ENCODE measurements at regions of chr1 and their contacts with region 1.

Region 1: GRCh38 chr1:30881319-30882181 is 27.0 kb downstream of the SDC3 start:
- DNase-seq: peak; percentile 63
- ATAC-seq: peak; percentile 90
- H3K4me3 Mint-ChIP-seq: peak overlapping the region; percentile 9
- H3K27ac Mint-ChIP-seq: peak overlapping the region; percentile 60
- H3K4me1 Mint-ChIP-seq: peaks cover 19% of the 10 kb centered on the region
- H3K27me3 Mint-ChIP-seq: peaks cover 38% of the 10 kb centered on the region
- CTCF ChIP-seq: no peak

Region 2: GRCh38 chr1:30847358-30847972 is 34.1 kb before region 1 on chr1:
- CTCF ChIA-PET with region 1: no interaction called
- POLR2A ChIA-PET with region 1: no interaction called
- intact Hi-C with region 1: no loop called
- DNase-seq: no peak
- ATAC-seq: no peak
- H3K4me3 Mint-ChIP-seq: no peak overlapping the region
- H3K27ac Mint-ChIP-seq: no peak overlapping the region
- H3K4me1 Mint-ChIP-seq: no peaks in the 10 kb centered on the region
- H3K27me3 Mint-ChIP-seq: peaks cover 57% of the 10 kb centered on the region
- CTCF ChIP-seq: no peak

Region 3: DNA sequence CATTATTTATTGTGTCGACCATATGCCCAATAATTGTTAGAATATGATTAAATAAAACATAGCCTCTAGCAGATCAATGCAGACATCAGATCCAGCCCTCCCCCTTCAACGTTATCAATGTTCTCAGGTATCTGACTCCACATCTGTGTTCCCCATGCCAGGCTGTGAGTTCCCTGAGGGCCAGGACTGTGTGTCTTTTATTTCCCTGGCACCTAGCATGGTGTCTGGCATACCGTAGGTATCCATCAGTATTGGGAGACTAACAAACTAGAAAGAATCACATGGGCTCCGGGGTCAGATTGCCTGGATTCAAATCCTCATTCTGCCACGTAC is 21.3 kb before region 1 on chr1:
- CTCF ChIA-PET with region 1: no interaction called
- POLR2A ChIA-PET with region 1: no interaction called
- intact Hi-C with region 1: no loop called
- DNase-seq: no peak
- ATAC-seq: no peak
- H3K4me3 Mint-ChIP-seq: no peak overlapping the region
- H3K27ac Mint-ChIP-seq: no peak overlapping the region
- H3K4me1 Mint-ChIP-seq: no peaks in the 10 kb centered on the region
- H3K27me3 Mint-ChIP-seq: peaks cover 46% of the 10 kb centered on the region
- CTCF ChIP-seq: no peak

Region 4: DNA sequence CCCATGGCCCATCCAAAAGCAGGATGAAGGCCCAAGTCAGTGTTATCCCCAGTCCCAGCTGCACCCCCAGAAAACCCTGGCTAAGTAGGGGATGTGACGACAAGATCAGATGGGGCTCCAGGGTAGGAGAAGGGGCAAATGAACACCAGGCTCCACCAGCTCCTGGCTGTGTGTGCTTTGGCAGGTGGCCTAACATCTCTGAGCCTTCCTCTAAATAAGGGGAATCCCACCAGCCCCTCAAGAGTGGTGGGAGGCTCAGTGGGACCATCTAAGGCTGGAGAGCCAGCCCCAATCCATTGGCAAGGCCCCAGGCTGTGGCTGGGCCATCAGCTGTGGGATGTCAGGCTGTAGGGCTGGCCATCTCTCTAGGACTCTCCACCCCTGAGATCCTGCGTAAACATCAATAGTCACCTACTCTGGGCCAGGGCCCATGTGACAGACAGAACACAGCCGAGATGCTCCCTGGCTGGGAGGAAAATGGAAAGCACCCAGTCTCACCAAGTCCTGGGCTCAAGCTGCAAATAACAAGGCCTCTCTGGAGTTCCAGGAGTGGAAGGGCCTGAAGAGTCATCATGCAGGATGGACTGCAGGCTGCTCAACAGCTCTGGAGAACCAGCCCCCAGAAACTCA is 19.5 kb after region 1 on chr1:
- CTCF ChIA-PET with region 1: no interaction called
- POLR2A ChIA-PET with region 1: interaction called, 3 read pairs
- intact Hi-C with region 1: loop called (anchors 2 kb)
- DNase-seq: no peak
- ATAC-seq: no peak
- H3K4me3 Mint-ChIP-seq: no peak overlapping the region
- H3K27ac Mint-ChIP-seq: no peak overlapping the region
- H3K4me1 Mint-ChIP-seq: peaks cover 17% of the 10 kb centered on the region
- H3K27me3 Mint-ChIP-seq: peaks cover 18% of the 10 kb centered on the region
- CTCF ChIP-seq: no peak

Measured in activated B cell treated with CpG ODN at 0.5 μM for 24 hours (primary cell).